Naive thymus-derived CD4-positive, alpha-beta T cell (primary cell): ENCODE measurements at regions of chr1 and their contacts with region 1.

Region 1: DNA sequence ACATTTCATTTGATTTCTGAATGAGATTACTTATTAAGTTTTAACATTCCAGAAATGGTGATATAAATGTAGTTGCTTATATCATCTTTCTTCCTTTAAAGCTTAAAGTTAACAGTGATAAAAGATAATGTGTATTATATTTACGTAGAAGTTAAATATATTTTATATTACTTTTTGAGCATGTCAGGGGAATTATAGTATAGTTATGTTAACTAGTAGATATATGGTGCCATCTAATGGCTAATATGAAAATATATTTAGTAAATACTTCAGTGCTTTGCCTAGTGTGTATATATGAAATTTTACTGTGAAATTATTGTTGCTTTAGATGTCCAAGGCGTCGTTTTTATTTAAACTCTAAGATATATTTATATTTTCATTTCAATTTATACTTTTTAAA is 51.5 kb downstream of the SYT14 start:
- DNase-seq: no peak
- ATAC-seq: no peak
- H3K4me3 ChIP-seq: no peak overlapping the region
- H3K4me3 Mint-ChIP-seq: no peak overlapping the region
- H3K27ac ChIP-seq: no peak overlapping the region
- H3K27ac Mint-ChIP-seq: no peak overlapping the region
- H3K4me1 ChIP-seq: no peaks in the 10 kb centered on the region
- H3K4me1 Mint-ChIP-seq: no peaks in the 10 kb centered on the region
- H3K27me3 ChIP-seq: no peaks in the 10 kb centered on the region
- H3K27me3 Mint-ChIP-seq: peaks cover 0 to 45% (median 43%) of the 10 kb centered on the region in 5 donors

Region 2: DNA sequence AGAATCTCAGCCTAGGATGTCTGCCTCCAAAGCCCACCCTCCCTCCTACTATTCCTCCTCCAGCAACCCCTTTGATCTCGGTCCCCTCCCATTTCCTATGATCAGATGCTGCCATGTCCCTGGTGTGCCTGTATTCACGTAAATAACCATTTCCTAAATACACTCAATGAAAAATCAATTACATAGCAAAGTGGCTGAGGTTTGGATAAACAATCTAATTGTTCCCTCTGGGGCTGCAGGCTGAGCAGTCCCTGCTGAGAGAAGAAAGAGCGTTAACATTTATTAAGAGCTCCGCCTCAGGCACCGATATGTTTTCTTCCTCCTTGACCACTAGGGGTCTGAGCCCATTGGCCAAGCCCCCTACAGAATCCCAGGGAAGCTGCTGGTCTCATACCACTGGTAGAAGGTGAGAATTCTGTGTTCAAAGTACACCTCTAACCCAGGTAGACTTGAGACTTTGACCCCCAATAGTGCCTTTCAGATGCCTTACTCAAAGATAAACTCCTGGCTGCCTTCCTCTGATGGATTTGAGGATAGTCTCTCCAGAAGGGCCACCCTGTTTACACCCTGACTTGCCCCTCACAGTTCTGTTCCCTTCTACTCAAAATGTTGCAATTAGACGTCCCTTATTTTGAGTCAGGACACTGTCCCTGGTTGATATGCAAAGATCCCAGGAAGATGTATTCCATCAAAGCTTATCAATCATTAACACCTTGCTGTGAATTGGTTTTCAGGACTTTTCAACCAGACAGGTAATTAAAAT is 439.9 kb before region 1 on chr1:
- CTCF ChIA-PET with region 1: no interaction called
- POLR2A ChIA-PET with region 1: no interaction called
- intact Hi-C with region 1: loop called in 1 of 2 experiments (anchors 10 kb)
- DNase-seq: no peak
- ATAC-seq: no peak
- H3K4me3 ChIP-seq: no peak overlapping the region
- H3K4me3 Mint-ChIP-seq: no peak overlapping the region
- H3K27ac ChIP-seq: no peak overlapping the region
- H3K27ac Mint-ChIP-seq: no peak overlapping the region
- H3K4me1 ChIP-seq: no peaks in the 10 kb centered on the region
- H3K4me1 Mint-ChIP-seq: peaks cover 0 to 8% (median 0%) of the 10 kb centered on the region in 7 donors
- H3K27me3 ChIP-seq: no peaks in the 10 kb centered on the region
- H3K27me3 Mint-ChIP-seq: peaks cover 0 to 35% (median 10%) of the 10 kb centered on the region in 5 donors

Region 3: DNA sequence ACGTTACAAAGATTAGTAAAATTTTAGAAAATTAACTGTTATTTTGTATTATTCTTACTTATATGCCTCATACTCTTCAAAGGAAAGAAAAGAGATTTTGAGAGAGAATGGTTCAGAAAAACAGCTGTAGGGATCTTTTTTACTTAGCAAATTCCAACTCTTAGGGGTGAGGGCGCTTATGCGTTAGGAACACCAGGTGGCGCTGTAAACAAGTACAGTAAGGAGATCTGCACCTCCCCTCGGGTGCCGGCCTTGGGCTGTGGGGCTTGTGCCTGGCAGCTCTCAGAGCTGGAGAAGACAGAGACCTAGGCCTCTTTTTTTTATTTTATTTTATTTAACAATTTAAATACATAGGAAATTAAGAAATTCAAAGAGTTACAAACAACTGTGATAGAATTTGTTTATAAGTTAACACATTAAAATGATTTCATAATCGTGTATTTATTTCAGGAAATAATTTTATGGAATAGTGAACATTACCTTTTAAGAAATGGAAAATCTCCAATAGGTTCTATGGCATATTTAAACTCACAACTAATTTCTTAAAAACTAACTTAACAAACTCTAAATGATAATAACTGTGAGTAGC is 129.1 kb before region 1 on chr1:
- CTCF ChIA-PET with region 1: interaction called, 3 read pairs
- POLR2A ChIA-PET with region 1: no interaction called
- intact Hi-C with region 1: loop called in 1 of 2 experiments (anchors 1 kb)
- DNase-seq: peak; percentile 32 to 68 (median 58)
- ATAC-seq: peak; percentile 88
- H3K4me3 ChIP-seq: no peak overlapping the region
- H3K4me3 Mint-ChIP-seq: no peak overlapping the region
- H3K27ac ChIP-seq: no peak overlapping the region
- H3K27ac Mint-ChIP-seq: no peak overlapping the region
- H3K4me1 ChIP-seq: no peaks in the 10 kb centered on the region
- H3K4me1 Mint-ChIP-seq: peaks cover 0 to 5% (median 0%) of the 10 kb centered on the region in 7 donors
- H3K27me3 ChIP-seq: no peaks in the 10 kb centered on the region
- H3K27me3 Mint-ChIP-seq: peaks cover 0 to 25% (median 15%) of the 10 kb centered on the region in 5 donors